CD4-positive, alpha-beta T cell (primary cell): ENCODE measurements at regions of chr16 and their contacts with region 1.

Region 1: DNA sequence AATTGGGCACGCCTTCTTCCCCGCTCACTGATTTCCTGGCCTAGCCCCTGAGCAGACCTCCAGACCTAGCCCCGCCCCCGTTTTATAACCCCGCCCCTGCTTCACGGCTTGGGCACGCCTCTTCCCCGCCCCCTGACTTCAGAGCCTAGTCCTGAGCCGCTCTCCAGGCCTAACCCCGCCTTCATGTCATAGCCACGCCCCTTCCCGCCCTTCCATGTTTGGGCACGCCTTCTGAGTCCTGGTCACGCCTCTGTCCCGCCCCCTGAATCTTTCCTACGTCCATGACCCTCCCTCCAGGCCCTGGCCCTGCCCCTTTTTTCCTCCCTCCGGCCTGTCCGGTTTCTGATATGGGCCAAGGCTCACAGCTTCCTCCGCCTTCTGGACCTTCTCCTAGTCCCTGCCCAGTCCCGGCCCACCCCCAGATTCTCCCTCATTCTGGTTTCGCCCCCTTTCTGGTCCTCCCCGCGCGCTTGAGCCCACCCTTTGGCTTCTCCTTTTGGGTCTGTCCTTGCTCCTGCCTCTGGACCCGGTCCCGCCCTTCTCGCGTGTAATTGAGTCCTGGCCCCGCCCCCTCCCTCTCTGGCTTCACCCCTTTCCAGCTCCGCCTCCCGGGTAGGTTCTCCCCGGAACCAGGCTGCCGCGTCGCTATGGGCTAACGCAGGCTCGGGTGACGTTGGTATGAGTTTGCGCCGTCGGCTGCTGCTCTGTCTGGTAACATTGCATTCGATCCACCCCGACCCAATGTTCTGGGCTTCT is 15.1 kb upstream of the EEF2K start:
- DNase-seq: peak; percentile 98 to 100 (median 100)
- ATAC-seq: peak; percentile 54
- H3K4me3 ChIP-seq: peak overlapping the region; percentile 65
- H3K4me3 Mint-ChIP-seq: peak overlapping the region; percentile 83
- H3K27ac ChIP-seq: peak overlapping the region; percentile 99 to 100
- H3K27ac Mint-ChIP-seq: peak overlapping the region; percentile 96
- H3K4me1 ChIP-seq: peaks cover 83% of the 10 kb centered on the region
- H3K4me1 Mint-ChIP-seq: peaks cover 63% of the 10 kb centered on the region
- H3K27me3 ChIP-seq: no peaks in the 10 kb centered on the region
- H3K27me3 Mint-ChIP-seq: peaks cover 7% of the 10 kb centered on the region
- CTCF ChIP-seq: no peak

Region 2: GRCh38 chr16:21523411-21524067 is 667.4 kb before region 1 on chr16:
- CTCF ChIA-PET with region 1: no interaction called
- POLR2A ChIA-PET with region 1: no interaction called
- intact Hi-C with region 1: loop called in 1 of 2 experiments (anchors 5 kb)
- DNase-seq: peak in 1 of 14 experiments; percentile 29
- ATAC-seq: no peak
- H3K4me3 ChIP-seq: no peak overlapping the region
- H3K4me3 Mint-ChIP-seq: peak overlapping the region; percentile 51
- H3K27ac ChIP-seq: no peak overlapping the region
- H3K27ac Mint-ChIP-seq: no peak overlapping the region
- H3K4me1 ChIP-seq: peaks cover 9% of the 10 kb centered on the region
- H3K4me1 Mint-ChIP-seq: peaks cover 9% of the 10 kb centered on the region
- H3K27me3 ChIP-seq: no peaks in the 10 kb centered on the region
- H3K27me3 Mint-ChIP-seq: no peaks in the 10 kb centered on the region
- CTCF ChIP-seq: no peak

Region 3: GRCh38 chr16:21646721-21647561 is 544.0 kb before region 1 on chr16:
- CTCF ChIA-PET with region 1: no interaction called
- POLR2A ChIA-PET with region 1: interaction called, 8 read pairs
- intact Hi-C with region 1: loop called in 1 of 2 experiments (anchors 2 kb)
- DNase-seq: peak; percentile 50 to 90 (median 68)
- ATAC-seq: peak; percentile 79
- H3K4me3 ChIP-seq: peak overlapping the region; percentile 6
- H3K4me3 Mint-ChIP-seq: peak overlapping the region; percentile 75
- H3K27ac ChIP-seq: peak overlapping the region; percentile 66 to 82
- H3K27ac Mint-ChIP-seq: peak overlapping the region; percentile 91
- H3K4me1 ChIP-seq: peaks cover 59% of the 10 kb centered on the region
- H3K4me1 Mint-ChIP-seq: peaks cover 56% of the 10 kb centered on the region
- H3K27me3 ChIP-seq: no peaks in the 10 kb centered on the region
- H3K27me3 Mint-ChIP-seq: no peaks in the 10 kb centered on the region
- CTCF ChIP-seq: no peak

Region 4: GRCh38 chr16:22001591-22001990 is 189.4 kb before region 1 on chr16:
- CTCF ChIA-PET with region 1: interaction called, 34 read pairs
- POLR2A ChIA-PET with region 1: interaction called, 14 read pairs
- intact Hi-C with region 1: loop called (anchors 1 kb)
- DNase-seq: no peak
- ATAC-seq: no peak
- H3K4me3 ChIP-seq: no peak overlapping the region
- H3K4me3 Mint-ChIP-seq: no peak overlapping the region
- H3K27ac ChIP-seq: no peak overlapping the region
- H3K27ac Mint-ChIP-seq: no peak overlapping the region
- H3K4me1 ChIP-seq: peaks cover 9% of the 10 kb centered on the region
- H3K4me1 Mint-ChIP-seq: peaks cover 15% of the 10 kb centered on the region
- H3K27me3 ChIP-seq: no peaks in the 10 kb centered on the region
- H3K27me3 Mint-ChIP-seq: no peaks in the 10 kb centered on the region
- CTCF ChIP-seq: no peak

Region 5: DNA sequence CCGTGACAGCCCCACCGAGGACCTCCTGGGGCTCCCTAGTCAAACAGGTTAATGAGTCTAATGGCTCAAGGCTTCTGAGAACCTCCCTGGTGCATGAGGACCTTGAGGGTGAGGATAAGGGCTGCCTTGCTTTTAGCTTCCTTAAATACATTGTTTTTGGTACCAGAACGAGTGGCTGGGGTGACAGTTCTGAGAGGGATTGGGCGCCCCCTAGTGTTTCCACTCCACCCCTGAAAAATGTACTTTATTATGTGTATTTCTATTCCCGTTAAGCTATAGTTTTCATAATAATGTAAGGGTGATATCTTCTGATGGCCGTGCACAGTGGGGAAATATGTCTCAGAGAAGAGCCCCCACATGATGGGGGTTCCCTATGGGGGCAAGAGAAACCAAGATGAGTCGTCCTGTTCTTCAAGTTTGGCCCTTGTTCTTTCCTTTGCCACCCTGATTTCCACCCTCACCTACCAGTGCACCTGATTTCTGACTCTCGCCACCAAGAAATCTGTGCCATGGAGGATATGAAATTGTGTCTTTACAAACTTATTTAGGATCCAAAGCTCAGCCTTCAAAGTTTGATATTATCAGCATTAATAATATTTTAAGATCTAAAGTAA is 113.1 kb before region 1 on chr16:
- CTCF ChIA-PET with region 1: interaction called, 27 read pairs
- POLR2A ChIA-PET with region 1: interaction called, 14 read pairs
- intact Hi-C with region 1: loop called (anchors 2 to 10 kb)
- DNase-seq: peak; percentile 56 to 83 (median 65)
- ATAC-seq: peak; percentile 76
- H3K4me3 ChIP-seq: no peak overlapping the region
- H3K4me3 Mint-ChIP-seq: no peak overlapping the region
- H3K27ac ChIP-seq: no peak overlapping the region
- H3K27ac Mint-ChIP-seq: no peak overlapping the region
- H3K4me1 ChIP-seq: peaks cover 6% of the 10 kb centered on the region
- H3K4me1 Mint-ChIP-seq: peaks cover 14% of the 10 kb centered on the region
- H3K27me3 ChIP-seq: no peaks in the 10 kb centered on the region
- H3K27me3 Mint-ChIP-seq: no peaks in the 10 kb centered on the region
- CTCF ChIP-seq: peak; percentile 89

Region 6: GRCh38 chr16:22240023-22240710 is 49.2 kb after region 1 on chr16:
- CTCF ChIA-PET with region 1: interaction called, 3 read pairs
- POLR2A ChIA-PET with region 1: interaction called, 6 read pairs
- intact Hi-C with region 1: loop called in 1 of 2 experiments (anchors 5 kb)
- DNase-seq: no peak
- ATAC-seq: no peak
- H3K4me3 ChIP-seq: no peak overlapping the region
- H3K4me3 Mint-ChIP-seq: peak overlapping the region; percentile 11
- H3K27ac ChIP-seq: no peak overlapping the region
- H3K27ac Mint-ChIP-seq: peak overlapping the region; percentile 87
- H3K4me1 ChIP-seq: peaks cover 39% of the 10 kb centered on the region
- H3K4me1 Mint-ChIP-seq: peaks cover 34% of the 10 kb centered on the region
- H3K27me3 ChIP-seq: no peaks in the 10 kb centered on the region
- H3K27me3 Mint-ChIP-seq: no peaks in the 10 kb centered on the region
- CTCF ChIP-seq: no peak

Region 7: GRCh38 chr16:22353191-22353919 is 162.4 kb after region 1 on chr16:
- CTCF ChIA-PET with region 1: no interaction called
- POLR2A ChIA-PET with region 1: interaction called, 16 read pairs
- intact Hi-C with region 1: no loop called
- DNase-seq: peak in 5 of 14 experiments; percentile 5 to 71 (median 37)
- ATAC-seq: peak; percentile 16
- H3K4me3 ChIP-seq: no peak overlapping the region
- H3K4me3 Mint-ChIP-seq: peak overlapping the region; percentile 39
- H3K27ac ChIP-seq: peak overlapping the region; percentile 38 to 53
- H3K27ac Mint-ChIP-seq: peak overlapping the region; percentile 85
- H3K4me1 ChIP-seq: peaks cover 38% of the 10 kb centered on the region
- H3K4me1 Mint-ChIP-seq: peaks cover 65% of the 10 kb centered on the region
- H3K27me3 ChIP-seq: no peaks in the 10 kb centered on the region
- H3K27me3 Mint-ChIP-seq: no peaks in the 10 kb centered on the region
- CTCF ChIP-seq: no peak